Gastrocnemius medialis (tissue), 4 donors: ENCODE measurements at regions of chr9 and their contacts with region 1.

Region 1: GRCh38 chr9:30301271-30301963 is 2083.0 kb upstream of the ACO1 start:
- DNase-seq: no peak
- ATAC-seq: no peak
- H3K4me3 ChIP-seq: no peak overlapping the region
- H3K27ac ChIP-seq: no peak overlapping the region
- H3K4me1 ChIP-seq: no peaks in the 10 kb centered on the region
- H3K27me3 ChIP-seq: no peaks in the 10 kb centered on the region
- CTCF ChIP-seq: no peak
- POLR2A ChIP-seq: no peak

Region 2: DNA sequence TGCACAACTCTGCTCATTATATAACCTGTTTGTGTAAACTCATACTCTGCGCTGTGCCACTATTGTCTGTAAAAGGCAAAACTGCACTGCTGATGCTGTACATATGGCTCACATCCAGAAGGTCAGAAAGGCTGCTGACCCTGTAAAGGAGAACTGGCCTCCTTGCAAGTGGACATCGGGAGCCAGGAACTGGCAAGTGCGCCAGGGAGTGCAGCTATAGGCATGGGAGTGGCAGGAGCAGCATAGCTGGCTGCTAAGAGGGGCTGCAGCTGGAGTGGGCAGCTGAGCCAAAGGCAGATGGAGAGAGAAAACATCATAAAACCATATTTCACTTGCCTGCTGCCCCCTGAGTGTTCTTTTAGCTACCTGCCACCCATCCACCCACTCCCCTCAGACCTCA is 100.4 kb before region 1 on chr9:
- in situ Hi-C with region 1: loop called in 1 of 4 experiments (anchors 25 kb)
- intact Hi-C with region 1: no loop called
- DNase-seq: no peak
- ATAC-seq: no peak
- H3K4me3 ChIP-seq: no peak overlapping the region
- H3K27ac ChIP-seq: no peak overlapping the region
- H3K4me1 ChIP-seq: no peaks in the 10 kb centered on the region
- H3K27me3 ChIP-seq: no peaks in the 10 kb centered on the region
- CTCF ChIP-seq: no peak
- POLR2A ChIP-seq: no peak